Activated CD4-positive, alpha-beta memory T cell treated with anti-CD3 and anti-CD28 coated beads, Interleukin-2, amount 10 ng/mL, durations not matched to agents 7 days and 5 days (primary cell): ENCODE measurements at regions of chr22 and their contacts with region 1.

Region 1: DNA sequence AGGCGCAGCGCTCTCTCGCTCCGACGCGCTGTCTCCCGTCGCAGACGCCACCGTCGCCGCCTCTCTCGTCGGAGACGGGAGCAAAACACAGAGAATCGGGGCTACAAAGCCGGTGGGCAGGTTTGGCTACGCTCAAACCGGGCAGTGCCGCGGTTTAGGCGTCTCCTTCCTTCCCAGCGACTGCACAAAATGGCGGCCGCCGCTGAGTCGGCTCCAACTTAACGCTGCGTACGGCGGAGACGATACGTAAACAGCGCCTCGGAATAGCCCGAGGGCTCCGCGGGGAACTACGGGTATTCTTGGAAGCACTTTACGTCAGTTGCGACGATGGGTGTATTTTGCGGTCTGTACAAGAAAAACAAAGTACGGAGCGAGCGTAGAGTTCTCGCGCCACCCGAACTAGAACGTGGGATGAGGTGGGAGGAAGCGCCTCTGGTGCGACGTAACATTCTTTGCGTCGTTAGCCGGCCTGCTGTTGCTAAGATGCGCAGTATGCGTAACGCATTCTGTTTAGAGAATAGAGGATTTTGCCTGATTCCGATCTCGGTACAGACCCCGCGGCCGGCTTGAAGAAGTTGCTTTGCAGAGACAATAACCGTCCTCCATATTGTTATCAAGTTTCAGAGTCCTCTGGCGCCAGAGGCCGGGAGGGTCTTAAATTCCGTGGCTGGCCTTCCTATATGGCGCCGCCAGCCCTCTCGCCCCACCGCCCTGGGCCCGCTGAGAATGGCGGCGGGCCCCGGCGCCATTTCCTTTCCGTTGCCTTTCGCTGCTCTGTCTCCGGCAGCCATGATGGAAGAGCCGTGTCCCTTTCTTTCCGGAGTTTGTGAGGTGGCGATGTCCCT is at the start of gene DDX17:
- DNase-seq: peak; percentile 96
- H3K4me3 Mint-ChIP-seq: peak within 1 kb of the TSS; percentile 99
- H3K27ac Mint-ChIP-seq: peak within 1 kb of the TSS; percentile 98
- H3K4me1 Mint-ChIP-seq: peaks cover 45% of the 10 kb centered on the region
- H3K27me3 Mint-ChIP-seq: no peaks in the 10 kb centered on the region
- total RNA-seq, gene DDX17: 511 to 521 TPM

Region 2: GRCh38 chr22:38481162-38481870 is 25.0 kb before region 1 on chr22:
- CTCF ChIA-PET with region 1: no interaction called
- POLR2A ChIA-PET with region 1: interaction called, 17 read pairs
- DNase-seq: no peak
- H3K4me3 Mint-ChIP-seq: no peak overlapping the region
- H3K27ac Mint-ChIP-seq: peak overlapping the region; percentile 33
- H3K4me1 Mint-ChIP-seq: peaks cover 7% of the 10 kb centered on the region
- H3K27me3 Mint-ChIP-seq: no peaks in the 10 kb centered on the region

Region 3: DNA sequence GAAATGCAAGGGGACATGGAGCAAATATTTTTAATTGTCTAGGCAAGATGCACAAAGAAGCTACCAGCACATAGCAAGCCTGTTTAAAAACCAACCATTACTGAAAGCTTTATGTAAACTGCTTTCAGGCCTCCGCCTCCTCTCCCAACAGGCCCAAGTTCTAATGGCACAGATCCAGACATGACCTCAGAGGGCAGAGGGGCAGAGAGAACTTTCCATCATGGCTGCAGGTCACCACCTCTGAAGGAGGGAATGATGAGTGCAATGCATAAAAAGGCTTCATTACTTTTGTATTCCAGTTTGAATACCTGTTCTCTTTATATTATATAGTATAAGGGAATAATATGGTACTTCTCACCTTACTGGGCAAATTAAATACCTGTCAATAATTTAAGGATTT is 15.4 kb before region 1 on chr22:
- CTCF ChIA-PET with region 1: interaction called, 13 read pairs
- POLR2A ChIA-PET with region 1: interaction called, 9 read pairs
- DNase-seq: no peak
- H3K4me3 Mint-ChIP-seq: no peak overlapping the region
- H3K27ac Mint-ChIP-seq: peak overlapping the region; percentile 67
- H3K4me1 Mint-ChIP-seq: peaks cover 53% of the 10 kb centered on the region
- H3K27me3 Mint-ChIP-seq: no peaks in the 10 kb centered on the region

Region 4: GRCh38 chr22:38569972-38570778 is 63.8 kb after region 1 on chr22 and contains the start of gene DMC1:
- CTCF ChIA-PET with region 1: no interaction called
- POLR2A ChIA-PET with region 1: interaction called, 13 read pairs
- DNase-seq: peak; percentile 98
- H3K4me3 Mint-ChIP-seq: peak within 1 kb of the TSS; percentile 89
- H3K27ac Mint-ChIP-seq: peak within 1 kb of the TSS; percentile 93
- H3K4me1 Mint-ChIP-seq: peaks cover 23% of the 10 kb centered on the region
- H3K27me3 Mint-ChIP-seq: peaks cover 2% of the 10 kb centered on the region
- total RNA-seq, gene DMC1: 12.5 to 12.6 TPM

Region 5: DNA sequence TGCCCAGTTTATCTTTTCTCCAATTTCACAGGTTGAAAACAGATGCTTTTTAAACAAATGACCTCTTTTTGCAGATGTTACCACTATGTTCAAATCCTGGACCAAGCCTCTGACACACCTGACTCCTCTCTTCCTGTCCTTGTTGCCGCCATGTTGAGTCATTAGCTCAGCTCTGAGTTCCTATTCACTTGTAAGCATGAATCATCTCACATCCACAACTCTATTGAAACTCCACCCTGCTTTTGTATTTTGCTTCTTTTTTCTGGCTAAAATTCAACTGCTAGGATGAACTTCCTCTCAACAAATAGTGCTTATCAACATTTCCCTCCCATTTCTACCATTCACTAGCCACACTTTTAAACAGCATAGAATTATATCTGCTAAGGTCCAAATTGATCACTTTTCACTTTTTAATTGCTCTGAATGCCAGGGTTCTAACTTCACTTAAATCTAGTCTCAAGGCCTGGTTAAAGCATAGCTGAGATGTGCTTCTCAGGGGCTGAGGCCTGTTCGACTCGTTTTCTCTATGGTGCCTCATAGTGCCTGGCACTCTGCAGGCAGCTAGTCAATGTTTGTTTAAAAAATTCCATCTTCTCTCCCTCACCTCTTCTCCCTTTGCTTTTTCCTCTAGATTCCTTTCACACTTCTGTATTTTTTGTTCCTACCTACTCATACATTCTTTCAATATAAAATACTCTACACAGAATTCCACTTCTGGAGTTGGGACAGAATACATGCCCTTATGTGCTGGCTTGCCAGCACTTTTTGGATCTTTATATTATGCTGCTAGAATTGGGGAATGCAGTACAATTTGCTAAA is 190.5 kb after region 1 on chr22:
- CTCF ChIA-PET with region 1: no interaction called
- POLR2A ChIA-PET with region 1: no interaction called
- DNase-seq: peak; percentile 61
- H3K4me3 Mint-ChIP-seq: peak overlapping the region; percentile 96
- H3K27ac Mint-ChIP-seq: peak overlapping the region; percentile 98
- H3K4me1 Mint-ChIP-seq: peaks cover 69% of the 10 kb centered on the region
- H3K27me3 Mint-ChIP-seq: no peaks in the 10 kb centered on the region